ENCODE measurements at regions of chr12 and their contacts with region 1.

Region 1: GRCh38 chr12:96985480-96986362 is 78.7 kb downstream of the NEDD1 start:
- DNase-seq: peak; percentile 6
- H3K4me3 ChIP-seq: peak overlapping the region; percentile 27 to 40
- H3K27ac ChIP-seq: peak overlapping the region in 1 of 2 donors; percentile 19
- H3K4me1 ChIP-seq: no peaks in the 10 kb centered on the region
- H3K27me3 ChIP-seq: no peaks in the 10 kb centered on the region
- CTCF ChIP-seq: peak; percentile 65 to 87 (median 78)
- POLR2A ChIP-seq: no peak

Region 2: DNA sequence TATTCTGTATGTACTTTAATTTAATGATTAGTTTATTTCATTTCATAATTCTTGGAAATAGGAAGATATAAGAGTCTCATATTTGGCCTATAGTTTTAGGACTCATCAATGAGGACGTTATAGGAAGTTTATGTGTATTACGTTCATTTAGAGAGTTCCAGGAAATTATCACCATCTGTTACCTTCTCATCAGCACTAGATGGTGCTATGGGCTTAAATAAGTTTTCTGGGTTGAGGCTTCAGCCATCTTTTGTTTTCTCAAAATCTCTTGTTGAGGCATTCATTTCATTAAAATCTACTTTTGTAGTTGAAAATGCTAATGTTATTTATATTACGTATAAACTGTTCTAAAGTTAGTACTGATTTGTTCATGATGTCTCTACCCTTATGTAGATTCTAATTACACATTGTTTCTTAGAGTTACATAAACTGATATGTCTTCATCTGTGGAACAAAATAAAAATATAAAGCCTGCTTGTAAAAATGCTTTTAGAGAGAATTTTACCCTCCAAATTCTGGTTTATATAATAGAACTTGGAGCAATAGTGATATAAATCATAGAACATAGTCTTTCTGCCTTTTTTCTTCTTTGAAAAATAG is 407.1 kb before region 1 on chr12:
- intact Hi-C with region 1: loop called (anchors 5 kb)
- DNase-seq: peak; percentile 10
- H3K4me3 ChIP-seq: no peak overlapping the region
- H3K27ac ChIP-seq: no peak overlapping the region
- H3K4me1 ChIP-seq: no peaks in the 10 kb centered on the region
- H3K27me3 ChIP-seq: no peaks in the 10 kb centered on the region
- CTCF ChIP-seq: peak in 3 of 4 experiments; percentile 61 to 75 (median 70)
- POLR2A ChIP-seq: no peak

Region 3: DNA sequence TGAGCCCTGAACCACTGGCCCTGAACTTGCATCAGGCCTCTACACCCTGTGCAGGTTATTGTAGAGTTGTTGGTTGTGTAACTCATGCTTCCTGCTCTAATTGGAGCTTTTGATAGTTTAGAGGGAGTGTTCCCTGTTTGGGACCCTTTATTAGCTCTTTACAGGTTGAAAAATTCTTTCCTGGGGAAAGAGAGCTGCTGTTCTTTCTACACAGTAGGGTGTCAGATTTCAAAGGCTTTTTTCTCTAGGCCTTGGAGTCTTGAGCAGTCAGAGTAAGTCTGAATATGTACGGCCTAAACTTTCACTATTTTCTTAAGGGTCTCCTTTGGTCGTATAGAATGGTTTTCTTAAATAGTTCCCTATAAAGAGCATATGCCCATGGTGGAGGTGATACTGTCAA is 139.4 kb before region 1 on chr12:
- intact Hi-C with region 1: no loop called
- DNase-seq: no peak
- H3K4me3 ChIP-seq: no peak overlapping the region
- H3K27ac ChIP-seq: no peak overlapping the region
- H3K4me1 ChIP-seq: no peaks in the 10 kb centered on the region
- H3K27me3 ChIP-seq: no peaks in the 10 kb centered on the region
- CTCF ChIP-seq: no peak
- POLR2A ChIP-seq: no peak

Region 4: DNA sequence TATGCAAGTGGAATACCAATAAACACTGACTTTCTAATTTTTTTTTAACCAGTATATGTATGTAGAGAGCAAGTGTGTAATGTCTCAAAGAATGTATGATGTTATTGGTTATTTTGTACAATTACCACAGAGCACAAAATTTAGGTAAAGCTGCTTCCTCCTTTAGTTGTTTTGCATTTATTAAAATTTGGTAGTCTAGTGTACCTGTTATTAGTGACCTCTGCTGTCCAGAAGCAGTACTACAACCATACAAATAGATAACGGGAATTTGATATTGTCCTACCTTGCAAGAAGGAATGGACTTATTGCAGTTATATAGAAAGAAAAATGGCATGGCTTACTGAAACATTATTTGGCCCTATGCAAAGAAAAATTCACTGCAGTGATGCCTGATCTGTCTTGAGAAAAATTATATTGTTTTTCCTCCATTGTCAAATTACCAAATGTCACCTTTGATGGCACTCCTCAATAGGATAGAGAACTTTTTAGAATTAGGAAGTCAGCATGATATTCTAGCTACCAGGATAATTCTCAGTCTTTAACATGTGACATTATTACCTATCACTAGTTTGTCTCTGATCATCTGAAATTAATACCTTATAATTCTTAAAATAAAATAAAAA is 323.0 kb after region 1 on chr12:
- intact Hi-C with region 1: loop called (anchors 10 kb)
- DNase-seq: peak; percentile 33
- H3K4me3 ChIP-seq: no peak overlapping the region
- H3K27ac ChIP-seq: no peak overlapping the region
- H3K4me1 ChIP-seq: no peaks in the 10 kb centered on the region
- H3K27me3 ChIP-seq: no peaks in the 10 kb centered on the region
- CTCF ChIP-seq: peak; percentile 35 to 73 (median 70)
- POLR2A ChIP-seq: no peak

Region 5: DNA sequence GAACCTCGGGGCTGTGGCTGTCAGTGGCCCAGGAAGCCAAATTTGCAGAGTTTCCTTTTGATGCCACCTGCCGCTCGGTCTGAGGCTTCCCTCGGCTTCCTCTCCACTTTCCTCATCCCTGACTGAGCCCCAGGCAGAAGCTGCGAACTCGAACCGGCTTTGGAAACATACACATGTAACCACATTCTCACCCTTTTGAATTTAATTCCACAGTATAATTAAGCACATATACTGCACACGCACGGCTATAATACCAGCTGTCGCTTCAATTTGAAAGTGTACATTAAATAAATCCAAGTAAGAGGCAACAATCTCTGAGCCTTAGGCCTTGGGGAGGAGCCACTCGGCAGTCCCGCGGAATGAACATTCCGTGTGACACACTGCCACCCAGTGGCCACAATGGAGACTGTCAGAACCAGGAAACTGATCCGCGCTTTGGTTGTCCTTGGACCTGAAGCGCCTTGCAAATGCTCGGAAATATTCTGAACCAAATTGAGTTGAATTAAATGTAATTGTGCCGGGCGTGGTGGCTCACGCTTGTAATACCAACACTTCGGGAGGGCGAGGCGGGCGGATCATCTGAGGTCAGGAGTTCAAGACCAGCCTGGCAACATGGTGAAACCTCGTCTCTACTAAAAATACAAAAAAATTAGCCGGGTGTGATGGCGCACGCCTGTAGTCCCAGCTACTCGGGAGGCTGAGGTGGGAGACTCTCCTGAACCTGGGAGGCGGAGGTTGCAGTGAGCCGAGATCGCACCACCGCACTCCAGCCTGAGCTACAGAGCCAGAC is 1411.8 kb after region 1 on chr12:
- intact Hi-C with region 1: loop called (anchors 10 kb)
- DNase-seq: peak; percentile 72
- H3K4me3 ChIP-seq: peak overlapping the region; percentile 23 to 24
- H3K27ac ChIP-seq: peak overlapping the region in 1 of 2 donors; percentile 52
- H3K4me1 ChIP-seq: no peaks in the 10 kb centered on the region
- H3K27me3 ChIP-seq: no peaks in the 10 kb centered on the region
- CTCF ChIP-seq: peak; percentile 58 to 92 (median 88)
- POLR2A ChIP-seq: no peak

Measured in prostate gland (tissue), 2 donors.